Endothelial cell of umbilical vein (primary cell): ENCODE measurements at regions of chr12 and their contacts with region 1.

Region 1: GRCh38 chr12:122851820-122852219 is 16.6 kb downstream of the HIP1R start:
- DNase-seq: peak; percentile 97
- H3K4me3 ChIP-seq: no peak overlapping the region
- H3K27ac ChIP-seq: peak overlapping the region; percentile 82
- H3K4me1 ChIP-seq: peaks cover 27% of the 10 kb centered on the region
- H3K27me3 ChIP-seq: no peaks in the 10 kb centered on the region
- CTCF ChIP-seq: no peak
- POLR2A ChIP-seq: peak; percentile 44

Region 2: DNA sequence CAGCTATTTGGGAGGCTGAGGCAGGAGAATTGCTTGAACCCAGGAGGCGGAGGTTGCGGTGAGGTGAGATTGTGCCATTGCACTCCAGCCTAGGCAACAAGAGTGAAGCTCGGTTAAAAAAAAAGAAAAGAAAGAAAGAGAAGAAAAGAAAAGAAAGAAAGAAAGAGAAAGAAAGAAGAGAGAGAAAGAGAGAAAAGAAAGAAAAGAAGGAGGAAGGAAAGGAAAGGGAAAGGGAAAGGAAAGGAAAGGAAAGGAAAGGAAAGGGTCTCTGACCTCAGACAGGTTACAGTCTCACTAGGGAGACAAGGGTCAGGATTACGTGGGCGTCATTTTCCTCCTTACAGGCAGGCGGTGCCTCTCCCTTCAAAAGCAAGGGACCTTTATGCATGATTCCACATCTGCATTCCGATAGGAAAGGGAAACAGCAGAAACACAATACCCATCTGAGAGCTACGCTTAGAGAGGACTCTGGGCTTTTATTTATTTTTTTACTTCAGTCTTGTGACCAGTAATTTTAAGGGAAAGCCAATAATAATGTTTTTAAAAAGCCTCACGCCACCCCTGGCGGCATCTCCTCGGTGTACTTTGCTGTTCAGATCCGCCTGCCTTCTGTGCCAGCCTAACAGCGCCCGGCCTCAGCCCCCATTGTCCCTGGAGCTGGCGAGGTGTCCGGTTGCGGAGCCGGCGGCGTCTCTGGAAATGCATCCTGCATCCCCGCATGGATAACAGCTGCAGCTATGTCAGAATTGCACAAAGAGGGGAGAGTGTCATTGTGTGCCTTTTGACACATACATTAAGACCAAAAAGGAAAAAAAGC is 17.5 kb before region 1 on chr12:
- CTCF ChIA-PET with region 1: interaction called, 7 read pairs
- POLR2A ChIA-PET with region 1: interaction called, 6 read pairs
- dilution Hi-C with region 1: no loop called
- intact Hi-C with region 1: loop called (anchors 1 kb)
- DNase-seq: peak; percentile 83
- H3K4me3 ChIP-seq: peak overlapping the region; percentile 1 to 91 (median 53)
- H3K27ac ChIP-seq: peak overlapping the region; percentile 19
- H3K4me1 ChIP-seq: peaks cover 17% of the 10 kb centered on the region
- H3K27me3 ChIP-seq: no peaks in the 10 kb centered on the region
- CTCF ChIP-seq: no peak
- POLR2A ChIP-seq: no peak

Region 3: DNA sequence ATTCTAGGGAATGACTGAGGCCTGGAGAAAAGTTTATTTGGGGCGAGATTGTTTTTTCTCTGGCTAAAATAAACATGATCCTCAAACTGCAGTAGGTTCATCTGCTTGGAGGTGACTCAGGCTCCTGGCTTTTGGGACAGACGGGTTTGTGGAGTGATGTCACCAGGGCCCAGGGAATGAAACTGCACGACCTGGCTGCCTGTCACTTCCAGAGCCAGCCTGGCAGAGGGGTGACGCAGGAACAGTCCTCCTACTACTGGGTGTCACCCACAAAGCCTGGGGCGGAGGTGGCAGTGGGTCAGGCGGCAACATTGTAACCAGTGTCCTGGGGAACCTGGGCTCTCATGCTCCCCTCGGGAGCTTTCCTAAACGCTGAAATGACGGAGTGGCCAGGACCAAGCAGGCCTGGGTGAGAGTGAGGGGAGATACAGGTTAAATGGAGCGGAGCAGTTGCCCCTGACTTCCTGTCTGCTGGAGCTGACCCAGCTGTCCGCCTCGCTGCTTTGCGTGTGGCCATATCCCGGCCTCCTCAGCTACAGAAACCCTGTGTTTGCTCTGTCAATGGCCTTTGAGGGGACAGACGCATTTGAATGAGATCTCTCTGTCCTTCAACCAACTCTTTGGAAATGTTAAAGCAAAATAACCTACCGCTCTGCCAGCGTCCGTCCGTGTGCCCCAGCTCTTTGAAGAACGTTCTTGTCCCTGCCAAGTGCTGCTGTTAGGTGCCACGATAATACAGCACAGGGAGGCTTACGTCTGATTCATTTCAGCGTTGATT is 10.1 kb before region 1 on chr12:
- CTCF ChIA-PET with region 1: interaction called, 6 read pairs
- POLR2A ChIA-PET with region 1: no interaction called
- dilution Hi-C with region 1: no loop called
- intact Hi-C with region 1: loop called (anchors 1 kb)
- DNase-seq: no peak
- H3K4me3 ChIP-seq: no peak overlapping the region
- H3K27ac ChIP-seq: no peak overlapping the region
- H3K4me1 ChIP-seq: peaks cover 41% of the 10 kb centered on the region
- H3K27me3 ChIP-seq: no peaks in the 10 kb centered on the region
- CTCF ChIP-seq: no peak
- POLR2A ChIP-seq: no peak

Region 4: GRCh38 chr12:122871851-122872780 is 20.3 kb after region 1 on chr12:
- CTCF ChIA-PET with region 1: no interaction called
- POLR2A ChIA-PET with region 1: no interaction called
- dilution Hi-C with region 1: no loop called
- intact Hi-C with region 1: no loop called
- DNase-seq: peak; percentile 84
- H3K4me3 ChIP-seq: peak overlapping the region in 2 of 3 experiments; percentile 25 to 60
- H3K27ac ChIP-seq: peak overlapping the region; percentile 92
- H3K4me1 ChIP-seq: peaks cover 32% of the 10 kb centered on the region
- H3K27me3 ChIP-seq: no peaks in the 10 kb centered on the region
- CTCF ChIP-seq: no peak
- POLR2A ChIP-seq: no peak